AG04450 (cell line): ENCODE measurements at regions of chr10 and their contacts with region 1.

Region 1: DNA sequence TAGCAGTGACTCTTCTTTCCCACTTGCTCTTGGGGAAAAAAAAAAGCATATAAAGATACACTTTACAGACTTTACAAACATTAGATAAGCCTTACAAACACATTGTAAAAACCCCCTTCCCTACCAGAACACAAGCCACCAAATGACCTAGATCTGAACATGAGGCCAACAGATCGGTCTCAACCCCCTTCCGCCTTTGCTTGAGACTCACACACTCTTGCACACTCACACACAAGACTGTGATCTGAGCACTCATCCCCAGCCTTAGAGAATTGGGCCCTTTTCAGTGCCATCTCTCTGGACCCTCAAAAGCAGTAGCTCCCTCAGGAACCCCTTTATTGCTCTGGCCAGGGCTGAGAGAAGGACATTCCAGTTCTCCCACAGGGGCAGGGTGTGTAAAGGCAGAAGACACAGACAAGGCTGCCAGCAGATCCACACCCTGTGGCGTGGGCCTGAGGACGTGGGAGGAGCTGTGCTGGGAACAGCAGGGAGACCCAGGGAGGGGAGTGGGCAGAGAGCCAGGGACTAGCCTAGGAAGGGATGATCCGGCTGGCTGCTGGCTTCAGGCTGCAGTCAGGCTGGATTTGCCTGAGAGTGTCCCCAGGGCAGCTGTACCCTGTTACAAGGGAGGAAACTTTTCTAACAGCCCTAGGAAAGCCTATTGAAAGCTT is 206.7 kb downstream of the KIAA1217 start:
- DNase-seq: no peak
- H3K4me3 ChIP-seq: no peak overlapping the region
- H3K27ac ChIP-seq: no peak overlapping the region
- H3K27me3 ChIP-seq: peaks cover 2% of the 10 kb centered on the region
- CTCF ChIP-seq: no peak

Region 2: DNA sequence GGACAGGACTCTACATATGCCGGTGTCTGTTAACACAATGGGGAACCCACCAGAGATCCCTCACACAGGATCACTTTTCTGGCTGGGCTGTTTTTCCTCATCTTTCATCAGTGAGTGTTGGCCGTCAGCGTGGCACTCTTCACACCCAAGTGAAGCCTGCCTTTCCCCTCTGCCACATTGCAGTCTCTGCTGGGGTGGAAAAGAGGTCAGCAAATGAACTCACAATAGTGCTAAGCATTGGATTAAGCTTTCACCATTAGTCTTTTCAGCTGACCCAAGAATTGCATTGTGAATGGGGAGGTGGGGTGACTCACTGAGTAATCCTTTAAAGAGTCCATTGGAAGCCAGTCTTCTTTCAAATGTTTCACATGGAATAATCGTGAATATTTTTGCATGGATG is 63.6 kb before region 1 on chr10:
- CTCF ChIA-PET with region 1: no interaction called
- POLR2A ChIA-PET with region 1: no interaction called
- DNase-seq: no peak
- H3K4me3 ChIP-seq: no peak overlapping the region
- H3K27ac ChIP-seq: no peak overlapping the region
- H3K27me3 ChIP-seq: no peaks in the 10 kb centered on the region
- CTCF ChIP-seq: no peak

Region 3: GRCh38 chr10:24513155-24513554 is 97.6 kb after region 1 on chr10:
- CTCF ChIA-PET with region 1: interaction called, 14 read pairs
- POLR2A ChIA-PET with region 1: no interaction called
- DNase-seq: no peak
- H3K4me3 ChIP-seq: no peak overlapping the region
- H3K27ac ChIP-seq: no peak overlapping the region
- H3K27me3 ChIP-seq: no peaks in the 10 kb centered on the region
- CTCF ChIP-seq: peak; percentile 69

Region 4: DNA sequence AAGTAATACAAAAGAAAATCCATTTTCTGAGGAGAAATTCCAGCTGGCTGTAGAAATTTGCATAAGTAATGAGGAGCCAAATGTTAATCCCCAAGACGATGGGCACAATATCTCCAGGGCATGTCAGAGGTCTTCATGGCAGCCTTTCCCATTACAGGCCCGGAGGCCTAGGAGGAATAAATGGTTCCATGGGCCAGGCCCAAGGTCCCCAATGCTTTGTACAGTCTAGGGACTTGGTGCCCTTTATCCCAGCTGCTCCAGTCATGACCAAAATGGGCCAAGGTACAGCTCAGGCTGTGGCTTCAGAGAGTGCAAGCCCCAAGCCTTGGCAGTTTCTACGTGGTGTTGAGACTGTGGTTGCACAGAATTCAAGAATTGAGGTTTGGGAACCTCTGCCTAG is 941.7 kb after region 1 on chr10:
- CTCF ChIA-PET with region 1: no interaction called
- POLR2A ChIA-PET with region 1: no interaction called
- DNase-seq: no peak
- H3K4me3 ChIP-seq: no peak overlapping the region
- H3K27ac ChIP-seq: no peak overlapping the region
- H3K27me3 ChIP-seq: no peaks in the 10 kb centered on the region
- CTCF ChIP-seq: no peak